ENCODE measurements at regions of chr3 and their contacts with region 1.

Region 1: GRCh38 chr3:45656575-45657363 is 32.4 kb upstream of the SACM1L start:
- DNase-seq: peak; percentile 89 to 96 (median 92)
- H3K4me3 ChIP-seq: no peak overlapping the region
- H3K27ac ChIP-seq: no peak overlapping the region
- H3K4me1 ChIP-seq: no peaks in the 10 kb centered on the region
- H3K27me3 ChIP-seq: no peaks in the 10 kb centered on the region
- CTCF ChIP-seq: peak; percentile 98

Region 2: GRCh38 chr3:45507820-45508317 is 148.9 kb before region 1 on chr3:
- intact Hi-C with region 1: loop called (anchors 5 kb)
- DNase-seq: peak in 4 of 5 donors; percentile 57 to 84 (median 74)
- H3K4me3 ChIP-seq: no peak overlapping the region
- H3K27ac ChIP-seq: no peak overlapping the region
- H3K4me1 ChIP-seq: peaks cover 6 to 13% (median 6%) of the 10 kb centered on the region in 3 donors
- H3K27me3 ChIP-seq: no peaks in the 10 kb centered on the region
- CTCF ChIP-seq: no peak

Region 3: DNA sequence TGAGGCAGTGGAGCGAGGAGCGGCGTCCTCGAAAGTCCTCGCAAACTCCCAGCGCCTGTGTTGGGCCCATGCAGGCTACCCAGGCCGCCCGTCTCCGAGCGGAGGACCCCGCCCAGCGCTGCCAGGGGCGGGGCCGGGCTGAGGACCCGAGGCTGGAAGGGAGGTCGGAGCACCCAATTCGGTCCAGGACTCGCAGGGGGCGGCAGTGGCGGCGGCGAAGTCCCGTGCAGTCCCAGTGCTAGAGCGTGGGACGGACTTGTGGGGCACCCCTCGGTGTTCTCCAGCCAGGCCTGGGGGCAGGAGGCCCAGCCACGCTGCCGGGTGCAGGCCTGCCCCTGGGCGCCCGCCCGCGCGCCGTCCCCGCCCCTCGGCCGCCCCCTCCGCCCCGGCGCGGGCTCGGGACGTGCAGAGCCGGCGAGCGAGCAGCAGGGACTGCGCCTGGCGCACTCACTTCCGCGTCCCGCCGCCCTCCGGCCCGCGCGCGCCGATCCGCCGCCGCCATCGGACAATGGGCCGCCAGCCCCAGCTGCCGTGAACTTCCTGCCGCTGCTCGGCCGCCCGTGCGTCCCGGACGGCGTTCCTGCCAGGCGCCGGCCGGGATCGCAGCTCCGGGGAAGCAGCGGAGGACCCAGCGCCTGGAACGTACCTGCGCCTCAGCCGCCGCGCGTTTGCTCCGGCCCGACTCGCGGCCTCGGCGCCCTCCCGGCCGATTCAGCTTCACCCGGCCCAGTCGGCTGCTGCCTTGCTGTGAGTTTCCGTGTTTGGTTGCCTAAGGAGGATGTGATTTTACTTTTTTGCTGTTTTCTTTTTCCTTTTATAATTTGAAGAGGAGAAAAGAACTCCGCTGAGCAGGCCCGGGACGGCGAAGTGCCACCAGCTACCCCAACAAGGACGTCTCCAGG is 62.8 kb before region 1 on chr3:
- intact Hi-C with region 1: loop called (anchors 10 kb)
- DNase-seq: peak; percentile 74 to 91 (median 86)
- H3K4me3 ChIP-seq: peak overlapping the region; percentile 58 to 78 (median 74)
- H3K27ac ChIP-seq: peak overlapping the region; percentile 63 to 83
- H3K4me1 ChIP-seq: peaks cover 0 to 33% (median 23%) of the 10 kb centered on the region in 3 donors
- H3K27me3 ChIP-seq: no peaks in the 10 kb centered on the region
- CTCF ChIP-seq: no peak

Region 4: GRCh38 chr3:45746777-45747622 is 90.2 kb after region 1 on chr3:
- intact Hi-C with region 1: no loop called
- DNase-seq: peak in 1 of 5 donors; percentile 64
- H3K4me3 ChIP-seq: no peak overlapping the region
- H3K27ac ChIP-seq: no peak overlapping the region
- H3K4me1 ChIP-seq: no peaks in the 10 kb centered on the region
- H3K27me3 ChIP-seq: no peaks in the 10 kb centered on the region
- CTCF ChIP-seq: no peak

Measured in kidney (tissue), 22 donors.